Mammary epithelial cell (primary cell): ENCODE measurements at regions of chr1 and their contacts with region 1.

Region 1: GRCh38 chr1:63868268-63868781 is 94.5 kb downstream of the ROR1 start:
- DNase-seq: peak; percentile 89
- H3K4me3 ChIP-seq: no peak overlapping the region
- H3K27ac ChIP-seq: peak overlapping the region; percentile 41
- H3K4me1 ChIP-seq: peaks cover 47% of the 10 kb centered on the region
- H3K27me3 ChIP-seq: no peaks in the 10 kb centered on the region
- CTCF ChIP-seq: no peak

Region 2: DNA sequence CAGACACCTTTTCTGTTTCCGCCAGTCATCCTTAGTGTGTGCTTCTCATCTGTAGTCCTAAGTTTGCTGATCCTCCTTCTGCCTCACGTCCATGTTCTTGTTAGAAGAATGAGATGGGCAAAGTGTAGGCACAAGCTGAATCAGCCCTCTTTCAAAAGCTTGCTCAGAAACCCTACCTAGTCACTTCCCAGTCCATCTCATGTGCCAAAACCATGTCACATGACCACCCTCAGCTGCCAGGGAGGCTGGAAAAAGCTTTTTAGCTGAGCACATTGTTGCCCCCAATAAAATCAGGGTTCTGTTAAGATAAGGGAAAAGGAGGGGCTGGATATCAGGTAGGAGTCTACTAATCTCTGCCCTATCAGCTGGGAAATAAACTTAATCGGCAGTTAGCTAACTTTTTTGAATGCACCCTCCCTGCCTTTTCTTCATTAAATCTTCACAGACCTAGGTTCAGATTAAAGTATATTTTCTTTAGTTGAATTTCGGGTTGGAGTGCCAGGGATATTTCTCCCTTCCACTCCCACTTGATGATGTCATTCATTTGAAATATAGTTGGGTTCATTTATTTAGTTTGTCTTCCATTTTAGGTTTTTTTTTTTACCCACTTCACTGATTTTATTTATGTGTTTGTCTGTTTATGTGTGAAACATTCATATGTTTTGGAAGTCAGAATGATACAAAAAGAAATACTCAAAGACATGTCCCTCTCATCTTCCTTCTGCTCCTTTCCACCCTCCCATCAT is 34.7 kb after region 1 on chr1:
- CTCF ChIA-PET with region 1: no interaction called
- dilution Hi-C with region 1: no loop called
- in situ Hi-C with region 1: no loop called
- intact Hi-C with region 1: loop called (anchors 5 kb)
- DNase-seq: no peak
- H3K4me3 ChIP-seq: no peak overlapping the region
- H3K27ac ChIP-seq: no peak overlapping the region
- H3K4me1 ChIP-seq: peaks cover 8% of the 10 kb centered on the region
- H3K27me3 ChIP-seq: no peaks in the 10 kb centered on the region
- CTCF ChIP-seq: no peak